ENCODE measurements at regions of chr3 and their contacts with region 1.

Region 1: DNA sequence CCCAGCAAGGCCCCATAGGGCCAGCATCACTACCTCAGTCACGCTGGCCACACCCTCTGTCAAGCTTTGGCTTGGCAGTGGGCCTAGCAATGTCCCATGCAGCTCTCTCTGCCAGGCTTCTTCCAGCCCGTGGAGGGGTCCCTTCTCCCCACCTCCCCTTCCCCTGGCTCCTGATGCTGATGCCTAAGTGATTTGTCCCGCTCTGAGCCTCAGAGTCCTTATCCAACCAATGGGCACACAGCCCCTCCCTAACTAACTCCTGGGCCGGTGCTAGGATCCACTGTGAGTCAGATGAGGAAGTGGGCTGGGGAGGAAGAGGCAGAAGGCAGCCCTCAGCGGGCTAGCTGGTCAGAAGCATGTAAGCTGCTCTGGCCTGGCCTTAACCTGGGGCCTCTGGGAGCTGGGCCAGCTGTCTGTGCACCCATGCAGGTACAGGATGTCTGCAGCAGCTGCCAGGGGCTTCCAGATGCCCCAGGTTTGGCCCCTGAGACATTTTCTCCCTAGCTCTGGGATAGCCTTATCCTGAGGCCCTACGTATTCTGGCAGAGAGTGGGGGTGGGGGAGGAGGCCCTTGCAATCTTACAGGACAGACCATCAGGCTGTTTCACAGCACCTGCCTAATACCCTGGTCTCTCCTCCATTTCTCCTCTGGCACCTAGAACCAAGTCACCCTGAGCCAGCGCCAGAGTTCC is 740 bp upstream of the ZBTB47 start:
- DNase-seq: peak; percentile 72 to 86
- H3K4me3 ChIP-seq: peak overlapping the region; percentile 66; the same call in 1 of the 2 replicates
- H3K27ac ChIP-seq: peak overlapping the region; percentile 65
- H3K4me1 ChIP-seq: peaks cover 33% of the 10 kb centered on the region
- H3K27me3 ChIP-seq: no peaks in the 10 kb centered on the region
- CTCF ChIP-seq: no peak

Region 2: GRCh38 chr3:42473083-42473932 is 179.4 kb before region 1 on chr3:
- CTCF ChIA-PET with region 1: no interaction called
- POLR2A ChIA-PET with region 1: no interaction called
- intact Hi-C with region 1: no loop called
- DNase-seq: peak; percentile 83 to 84
- H3K4me3 ChIP-seq: peak overlapping the region; percentile 10; the same call in 1 of the 2 replicates
- H3K27ac ChIP-seq: peak overlapping the region; percentile 50
- H3K4me1 ChIP-seq: peaks cover 60% of the 10 kb centered on the region
- H3K27me3 ChIP-seq: no peaks in the 10 kb centered on the region
- CTCF ChIP-seq: no peak

Region 3: DNA sequence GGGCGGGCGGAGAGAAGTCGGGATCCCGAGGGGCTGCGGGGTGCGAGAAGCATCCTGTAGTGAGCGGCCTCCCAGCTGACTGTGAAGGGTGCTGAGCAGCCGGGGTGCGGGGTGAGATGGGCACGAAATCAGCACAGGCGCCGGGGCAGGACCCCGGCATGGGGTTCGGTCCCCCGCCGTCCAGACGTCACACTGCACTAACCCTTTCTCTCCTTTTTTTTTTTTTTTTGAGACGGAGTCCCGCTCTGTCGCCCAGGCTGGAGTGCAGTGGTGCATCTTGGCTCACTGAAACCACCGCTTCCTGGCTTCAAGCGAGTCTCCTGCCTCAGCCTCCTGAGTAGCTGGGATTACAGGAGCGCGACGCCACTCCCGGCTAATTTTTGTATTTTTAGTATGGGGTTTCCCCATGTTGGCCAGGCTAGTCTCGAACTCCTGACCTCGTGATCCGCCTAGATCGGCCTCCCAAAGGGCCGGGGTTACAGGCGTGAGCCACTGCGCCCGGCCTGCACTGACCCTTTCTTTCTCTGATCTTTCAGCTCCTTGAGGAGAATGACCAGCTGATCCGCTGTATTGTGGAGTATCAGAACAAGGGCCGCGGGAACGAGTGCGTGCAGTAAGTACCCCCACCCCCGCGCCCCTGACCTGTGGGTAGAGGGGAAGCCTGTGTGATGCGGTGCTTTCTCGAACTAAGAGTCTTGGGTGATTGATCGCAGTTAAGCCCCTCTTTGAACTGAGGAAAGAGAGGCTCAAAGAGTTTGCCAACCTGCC is 61.6 kb before region 1 on chr3:
- CTCF ChIA-PET with region 1: interaction called, 17 read pairs
- POLR2A ChIA-PET with region 1: interaction called, 3 read pairs
- intact Hi-C with region 1: no loop called
- DNase-seq: no peak
- H3K4me3 ChIP-seq: peak overlapping the region; percentile 65
- H3K27ac ChIP-seq: peak overlapping the region; percentile 26
- H3K4me1 ChIP-seq: peaks cover 21% of the 10 kb centered on the region
- H3K27me3 ChIP-seq: no peaks in the 10 kb centered on the region
- CTCF ChIP-seq: no peak

Region 4: GRCh38 chr3:42600111-42600988 is 52.4 kb before region 1 on chr3 and contains the start of gene NKTR:
- CTCF ChIA-PET with region 1: interaction called, 3 read pairs
- POLR2A ChIA-PET with region 1: interaction called, 18 read pairs
- intact Hi-C with region 1: loop called (anchors 2 kb)
- DNase-seq: peak; percentile 98 to 99
- H3K4me3 ChIP-seq: peak within 1 kb of the TSS; percentile 74
- H3K27ac ChIP-seq: peak within 1 kb of the TSS; percentile 86
- H3K4me1 ChIP-seq: peaks cover 27% of the 10 kb centered on the region
- H3K27me3 ChIP-seq: no peaks in the 10 kb centered on the region
- CTCF ChIP-seq: no peak
- total RNA-seq, gene NKTR: 66.0 and 70.5 TPM in 2 replicates

Region 5: DNA sequence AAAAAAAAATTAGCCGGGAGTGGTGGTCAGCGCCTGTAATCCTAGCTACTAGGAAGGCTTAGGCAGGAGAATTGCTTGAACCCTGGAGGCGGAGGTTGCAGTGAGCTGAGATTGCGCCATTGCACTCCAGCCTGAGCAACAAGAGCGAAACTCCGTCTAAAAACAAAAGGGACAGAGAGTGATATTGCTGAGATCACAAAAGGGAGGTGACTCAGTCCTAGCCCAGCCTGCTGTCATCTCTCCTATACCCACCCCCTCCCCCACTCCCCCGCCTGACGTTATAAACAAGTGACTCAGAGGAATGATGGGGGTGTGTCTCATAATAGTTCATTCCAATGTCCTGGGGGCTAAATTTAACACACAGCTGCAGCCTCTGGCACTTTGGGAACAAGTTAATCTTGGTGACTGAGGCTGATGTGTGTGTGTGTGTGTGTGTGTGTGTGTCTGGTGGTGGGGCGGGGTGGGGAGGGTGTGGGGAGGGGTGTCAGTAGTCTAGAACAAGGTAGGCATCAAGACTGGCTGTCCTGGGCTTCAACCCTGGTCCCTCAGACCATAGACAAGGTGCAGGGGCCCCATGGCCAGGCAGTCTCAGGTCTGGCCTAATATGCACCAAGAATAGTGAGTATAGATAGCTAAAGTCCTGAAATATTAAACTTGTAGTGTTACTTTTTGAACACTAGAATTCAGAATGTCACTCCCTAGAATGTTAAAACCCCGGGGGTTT is 31.3 kb after region 1 on chr3:
- CTCF ChIA-PET with region 1: no interaction called
- POLR2A ChIA-PET with region 1: no interaction called
- intact Hi-C with region 1: loop called (anchors 1 kb)
- DNase-seq: peak; percentile 56 to 88
- H3K4me3 ChIP-seq: 0 out of 2 replicates have a peak overlapping the region, but pooled peaks have one; percentile 17
- H3K27ac ChIP-seq: peak overlapping the region; percentile 41; the same call in 1 of the 2 replicates
- H3K4me1 ChIP-seq: peaks cover 21% of the 10 kb centered on the region
- H3K27me3 ChIP-seq: no peaks in the 10 kb centered on the region
- CTCF ChIP-seq: no peak

Region 6: GRCh38 chr3:42749753-42750231 is 97.0 kb after region 1 on chr3:
- CTCF ChIA-PET with region 1: interaction called, 15 read pairs
- POLR2A ChIA-PET with region 1: no interaction called
- intact Hi-C with region 1: loop called (anchors 2 kb)
- DNase-seq: peak in 1 of 2 experiments; percentile 12
- H3K4me3 ChIP-seq: no peak overlapping the region
- H3K27ac ChIP-seq: no peak overlapping the region
- H3K4me1 ChIP-seq: 0 out of 2 replicates have a peak, but pooled peaks cover 12% of the 10 kb centered on the region
- H3K27me3 ChIP-seq: no peaks in the 10 kb centered on the region
- CTCF ChIP-seq: peak; percentile 48

Region 7: GRCh38 chr3:42819351-42819965 is 166.7 kb after region 1 on chr3:
- CTCF ChIA-PET with region 1: no interaction called
- POLR2A ChIA-PET with region 1: no interaction called
- intact Hi-C with region 1: no loop called
- DNase-seq: no peak
- H3K4me3 ChIP-seq: no peak overlapping the region
- H3K27ac ChIP-seq: peak overlapping the region; percentile 82
- H3K4me1 ChIP-seq: peaks cover 54% of the 10 kb centered on the region
- H3K27me3 ChIP-seq: no peaks in the 10 kb centered on the region
- CTCF ChIP-seq: no peak